WTC11 (cell line): ENCODE measurements at regions of chr19 and their contacts with region 1.

Region 1: GRCh38 chr19:15177269-15178116 is 23.3 kb downstream of the NOTCH3 start:
- DNase-seq: peak; percentile 92
- ATAC-seq: peak; percentile 68
- H3K4me3 Mint-ChIP-seq: peak overlapping the region; percentile 44
- H3K27ac Mint-ChIP-seq: peak overlapping the region; percentile 10
- H3K4me1 Mint-ChIP-seq: peaks cover 13% of the 10 kb centered on the region
- H3K27me3 Mint-ChIP-seq: no peaks in the 10 kb centered on the region
- CTCF ChIP-seq: peak; percentile 93

Region 2: GRCh38 chr19:15195371-15196334 is 18.2 kb after region 1 on chr19:
- CTCF ChIA-PET with region 1: interaction called, 37 read pairs
- POLR2A ChIA-PET with region 1: interaction called, 8 read pairs
- DNase-seq: peak; percentile 97
- ATAC-seq: peak; percentile 58
- H3K4me3 Mint-ChIP-seq: peak overlapping the region; percentile 77
- H3K27ac Mint-ChIP-seq: 0 out of 2 replicates have a peak overlapping the region, but pooled peaks have one; percentile 70
- H3K4me1 Mint-ChIP-seq: peaks cover 31% of the 10 kb centered on the region
- H3K27me3 Mint-ChIP-seq: no peaks in the 10 kb centered on the region
- CTCF ChIP-seq: no peak

Region 3: GRCh38 chr19:15241259-15241910 is 63.9 kb after region 1 on chr19:
- CTCF ChIA-PET with region 1: interaction called, 10 read pairs
- POLR2A ChIA-PET with region 1: interaction called, 3 read pairs
- DNase-seq: no peak
- ATAC-seq: no peak
- H3K4me3 Mint-ChIP-seq: no peak overlapping the region
- H3K27ac Mint-ChIP-seq: no peak overlapping the region
- H3K4me1 Mint-ChIP-seq: no peaks in the 10 kb centered on the region
- H3K27me3 Mint-ChIP-seq: no peaks in the 10 kb centered on the region
- CTCF ChIP-seq: no peak